Aorta (tissue), 5 donors: ENCODE measurements at regions of chr10 and their contacts with region 1.

Region 1: GRCh38 chr10:59625721-59626522 is 83.7 kb downstream of the SLC16A9 start:
- DNase-seq: no peak
- ATAC-seq: peak; percentile 88
- H3K4me3 ChIP-seq: no peak overlapping the region
- H3K27ac ChIP-seq: no peak overlapping the region
- H3K4me1 ChIP-seq: peaks cover 0 to 2% of the 10 kb centered on the region in 2 donors
- H3K27me3 ChIP-seq: no peaks in the 10 kb centered on the region

Region 2: DNA sequence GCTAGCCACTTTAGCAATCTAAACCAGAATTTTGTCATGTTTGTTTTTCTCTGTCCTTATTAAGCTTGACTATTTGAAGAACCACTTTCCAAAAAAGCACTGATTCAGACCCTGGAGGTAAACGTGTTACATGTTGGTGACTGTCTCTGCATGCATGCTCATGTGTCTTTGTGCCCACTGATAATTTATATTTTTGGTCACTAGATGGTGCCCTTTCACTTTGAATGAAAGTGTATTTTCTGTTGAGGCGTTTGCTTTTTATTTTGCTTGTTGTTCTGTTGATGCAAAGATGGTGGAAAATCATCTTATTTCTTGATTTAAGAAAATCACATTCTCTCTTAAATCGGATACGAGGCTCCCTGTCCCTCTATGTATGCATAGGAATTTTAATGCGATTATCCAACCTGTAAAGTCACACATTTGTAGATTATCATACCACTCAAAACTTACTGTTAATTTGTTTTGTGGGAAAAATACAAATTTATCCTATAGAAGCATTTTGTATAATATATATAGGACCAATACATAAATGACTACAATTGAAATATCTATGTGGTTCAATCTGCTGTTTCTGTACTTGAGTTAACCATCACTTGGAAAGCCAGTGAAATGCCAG is 843.9 kb before region 1 on chr10:
- intact Hi-C with region 1: loop called (anchors 5 to 10 kb)
- DNase-seq: no peak
- ATAC-seq: peak; percentile 54
- H3K4me3 ChIP-seq: no peak overlapping the region
- H3K27ac ChIP-seq: no peak overlapping the region
- H3K4me1 ChIP-seq: no peaks in the 10 kb centered on the region
- H3K27me3 ChIP-seq: no peaks in the 10 kb centered on the region

Region 3: DNA sequence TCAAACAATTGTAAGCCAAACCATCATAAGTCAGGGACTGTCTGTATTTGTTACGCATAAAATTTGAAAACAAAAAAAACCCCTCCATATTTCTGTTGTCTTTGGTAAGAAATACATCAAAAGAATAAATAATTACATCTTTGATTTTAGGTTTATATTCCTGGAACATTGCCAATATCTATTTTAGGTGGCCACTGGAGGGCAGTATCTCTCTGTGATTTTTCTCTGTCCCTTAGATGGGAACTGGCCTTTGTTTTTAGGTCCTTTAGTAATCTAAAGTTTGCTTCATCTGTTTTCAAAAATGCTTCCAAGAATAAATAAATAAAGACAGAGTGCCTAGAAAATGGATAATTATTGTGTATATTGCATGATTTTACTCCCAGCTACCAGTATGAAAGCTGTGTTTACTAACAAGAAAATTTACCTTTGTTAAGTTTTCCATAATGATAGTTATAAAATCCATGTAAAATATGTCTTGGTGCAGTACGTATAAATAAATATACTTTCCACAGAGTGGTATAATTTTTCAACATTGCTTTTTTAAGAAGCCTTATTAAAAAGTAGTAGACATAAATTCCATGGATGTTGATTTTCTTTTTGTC is 385.2 kb before region 1 on chr10:
- intact Hi-C with region 1: loop called (anchors 2 to 5 kb)
- DNase-seq: no peak
- ATAC-seq: no peak
- H3K4me3 ChIP-seq: no peak overlapping the region
- H3K27ac ChIP-seq: no peak overlapping the region
- H3K4me1 ChIP-seq: no peaks in the 10 kb centered on the region
- H3K27me3 ChIP-seq: no peaks in the 10 kb centered on the region

Region 4: DNA sequence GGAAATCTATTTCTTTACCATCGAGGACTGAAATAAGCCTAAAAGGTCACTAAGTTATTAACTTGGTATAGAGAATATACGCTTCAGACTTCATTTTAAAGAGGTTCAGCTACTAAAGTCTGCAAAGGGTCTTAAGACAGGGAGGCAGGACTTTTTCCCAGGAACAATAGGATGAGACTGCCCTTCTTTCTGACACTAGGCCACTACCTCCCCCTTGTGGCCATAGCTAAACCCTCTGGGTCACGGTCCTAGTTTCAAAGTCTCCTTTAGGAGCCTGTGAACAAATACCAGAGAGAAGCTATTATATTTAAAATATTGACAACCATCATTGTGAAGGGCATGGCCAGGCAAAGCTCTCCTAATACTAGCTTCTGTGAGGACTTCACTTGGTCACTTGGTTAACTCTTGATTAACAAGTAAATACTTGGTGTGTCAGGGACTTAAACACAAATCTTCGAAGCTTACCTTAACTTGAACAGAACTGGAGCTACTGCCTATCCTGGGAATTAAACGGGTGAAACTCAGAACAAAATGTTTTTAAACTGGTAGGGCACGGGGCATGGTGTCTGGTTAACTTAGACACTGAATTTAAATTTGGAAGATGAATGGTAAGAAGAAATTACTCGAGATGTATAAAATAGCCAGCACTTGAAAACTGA is 204.8 kb after region 1 on chr10:
- intact Hi-C with region 1: loop called (anchors 5 to 10 kb)
- DNase-seq: no peak
- ATAC-seq: peak; percentile 63
- H3K4me3 ChIP-seq: no peak overlapping the region
- H3K27ac ChIP-seq: no peak overlapping the region
- H3K4me1 ChIP-seq: peaks cover 3 to 11% of the 10 kb centered on the region in 2 donors
- H3K27me3 ChIP-seq: no peaks in the 10 kb centered on the region

Region 5: GRCh38 chr10:60032723-60033122 is 406.8 kb after region 1 on chr10:
- intact Hi-C with region 1: loop called in 1 of 2 experiments (anchors 2 kb)
- DNase-seq: peak in 1 of 2 donors; percentile 49
- ATAC-seq: peak; percentile 72
- H3K4me3 ChIP-seq: no peak overlapping the region
- H3K27ac ChIP-seq: no peak overlapping the region
- H3K4me1 ChIP-seq: no peaks in the 10 kb centered on the region
- H3K27me3 ChIP-seq: no peaks in the 10 kb centered on the region

Region 6: GRCh38 chr10:60208676-60209269 is 582.9 kb after region 1 on chr10:
- intact Hi-C with region 1: loop called in 1 of 2 experiments (anchors 5 kb)
- DNase-seq: no peak
- ATAC-seq: no peak
- H3K4me3 ChIP-seq: no peak overlapping the region
- H3K27ac ChIP-seq: no peak overlapping the region
- H3K4me1 ChIP-seq: peaks cover 0 to 3% of the 10 kb centered on the region in 2 donors
- H3K27me3 ChIP-seq: no peaks in the 10 kb centered on the region